ENCODE measurements at regions of chr2 and their contacts with region 1.

Region 1: GRCh38 chr2:8152392-8153257 is 529.2 kb upstream of the ID2 start:
- DNase-seq: no peak
- H3K4me3 Mint-ChIP-seq: no peak overlapping the region
- H3K27ac Mint-ChIP-seq: peak overlapping the region; percentile 62
- H3K4me1 Mint-ChIP-seq: peaks cover 38% of the 10 kb centered on the region
- H3K27me3 Mint-ChIP-seq: no peaks in the 10 kb centered on the region

Region 2: DNA sequence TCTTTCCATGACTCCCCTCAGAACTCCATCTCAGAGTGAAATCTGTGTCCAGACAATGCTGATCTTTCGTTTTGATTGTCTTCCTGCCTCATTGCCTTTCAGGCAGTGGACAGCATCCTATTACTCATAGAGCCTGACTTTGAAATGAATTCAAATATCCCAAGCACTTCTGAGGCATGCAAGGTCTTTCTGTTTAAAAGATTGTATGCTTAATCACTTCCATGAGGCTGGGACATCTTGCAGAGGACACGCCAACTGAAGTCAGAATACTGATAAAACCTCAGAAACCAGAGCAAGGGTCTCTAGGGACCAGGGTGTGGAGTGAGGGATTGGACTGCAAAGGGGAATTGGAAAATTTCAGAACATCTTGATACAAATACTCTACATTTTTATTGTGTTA is 307.3 kb before region 1 on chr2:
- intact Hi-C with region 1: loop called (anchors 1 kb)
- DNase-seq: no peak
- H3K4me3 Mint-ChIP-seq: no peak overlapping the region
- H3K27ac Mint-ChIP-seq: no peak overlapping the region
- H3K4me1 Mint-ChIP-seq: peaks cover 57% of the 10 kb centered on the region
- H3K27me3 Mint-ChIP-seq: no peaks in the 10 kb centered on the region

Region 3: GRCh38 chr2:8049851-8050571 is 102.6 kb before region 1 on chr2:
- intact Hi-C with region 1: loop called (anchors 1 kb)
- DNase-seq: peak; percentile 52
- H3K4me3 Mint-ChIP-seq: peak overlapping the region; percentile 43
- H3K27ac Mint-ChIP-seq: peak overlapping the region; percentile 93
- H3K4me1 Mint-ChIP-seq: peaks cover 48% of the 10 kb centered on the region
- H3K27me3 Mint-ChIP-seq: no peaks in the 10 kb centered on the region

Region 4: GRCh38 chr2:8169443-8169842 is 16.8 kb after region 1 on chr2:
- intact Hi-C with region 1: loop called (anchors 1 kb)
- DNase-seq: no peak
- H3K4me3 Mint-ChIP-seq: no peak overlapping the region
- H3K27ac Mint-ChIP-seq: no peak overlapping the region
- H3K4me1 Mint-ChIP-seq: peaks cover 13% of the 10 kb centered on the region
- H3K27me3 Mint-ChIP-seq: no peaks in the 10 kb centered on the region

Region 5: DNA sequence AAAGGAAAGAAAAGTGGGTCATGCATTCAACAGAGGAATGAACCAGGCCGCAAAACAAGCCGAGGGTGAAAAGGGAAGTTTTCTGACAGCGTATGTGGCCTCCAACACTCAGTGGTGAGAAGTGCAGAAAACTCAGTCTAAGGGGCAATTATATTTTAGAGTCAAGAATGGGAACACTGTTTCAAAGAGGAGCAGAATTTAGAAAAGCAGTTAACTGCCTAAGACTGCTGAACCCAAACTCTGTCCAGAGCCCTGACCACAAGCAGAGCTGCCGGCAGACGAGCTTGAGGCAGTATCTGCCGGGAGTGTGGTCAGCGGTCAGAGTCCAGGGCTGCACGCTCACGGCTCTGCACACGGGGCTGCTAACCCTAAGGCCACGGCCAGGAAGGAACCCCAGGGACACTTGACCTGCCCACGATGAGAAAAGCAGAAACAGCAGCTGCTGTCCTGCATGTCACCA is 182.3 kb after region 1 on chr2:
- intact Hi-C with region 1: loop called (anchors 1 kb)
- DNase-seq: no peak
- H3K4me3 Mint-ChIP-seq: no peak overlapping the region
- H3K27ac Mint-ChIP-seq: no peak overlapping the region
- H3K4me1 Mint-ChIP-seq: peaks cover 15% of the 10 kb centered on the region
- H3K27me3 Mint-ChIP-seq: peaks cover 6% of the 10 kb centered on the region

Region 6: DNA sequence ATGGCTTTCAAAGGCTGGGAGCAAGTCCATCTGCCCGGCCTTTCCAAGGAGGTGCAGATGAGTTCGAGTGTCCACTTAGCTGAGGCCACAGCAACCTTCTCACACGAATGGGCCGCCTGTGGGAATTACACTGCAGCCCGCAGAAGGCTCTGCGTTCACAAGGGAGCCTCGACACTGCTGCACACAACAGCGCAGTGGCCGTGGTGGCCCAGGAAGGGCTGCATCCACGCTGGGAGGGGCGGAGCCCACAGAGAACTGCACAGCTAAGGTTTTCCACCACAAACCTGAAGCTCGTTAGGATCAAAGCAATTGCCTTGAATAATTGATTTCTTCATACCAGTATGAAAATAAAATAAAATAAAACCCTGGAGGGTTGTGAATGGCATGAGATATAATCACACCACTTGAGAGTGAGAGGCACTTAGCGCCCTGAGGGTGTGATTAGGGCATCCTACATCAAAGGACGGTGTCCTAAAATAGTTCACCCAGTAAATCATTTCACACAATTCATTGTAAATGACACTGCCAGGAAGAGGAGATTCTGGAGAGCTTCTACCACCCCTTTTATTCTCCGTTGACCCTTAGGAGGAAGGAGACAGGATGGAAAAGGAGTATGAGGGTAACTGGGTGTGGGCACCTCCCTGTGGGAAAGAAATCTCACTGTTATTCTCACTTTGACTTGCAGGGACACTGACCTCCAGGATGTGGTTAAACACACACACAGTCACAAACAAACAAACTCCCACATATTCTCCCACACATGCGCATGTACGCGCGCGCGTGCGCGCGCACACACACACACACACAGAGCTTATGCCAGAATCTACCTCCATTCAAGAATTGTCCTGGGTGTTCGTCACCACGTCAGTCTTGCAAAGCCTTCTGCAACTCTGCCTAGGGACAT is 272.6 kb after region 1 on chr2:
- intact Hi-C with region 1: no loop called
- DNase-seq: no peak
- H3K4me3 Mint-ChIP-seq: no peak overlapping the region
- H3K27ac Mint-ChIP-seq: peak overlapping the region; percentile 80
- H3K4me1 Mint-ChIP-seq: peaks cover 32% of the 10 kb centered on the region
- H3K27me3 Mint-ChIP-seq: no peaks in the 10 kb centered on the region

Measured in activated T-helper 1 cell treated with anti-CD3 and anti-CD28 coated beads, Interleukin-12 subunit alpha, Interleukin-12 subunit beta, Interleukin-2, Interleukin-4 antibody, amounts not matched to agents 30 ng/mL and 10 ng/mL and 1 ng/mL, durations not matched to agents 14 hours and 24 hours and 36 hours (primary cell).